Activated B cell treated with CpG ODN at 0.5 μM for 24 hours (primary cell): ENCODE measurements at regions of chr20 and their contacts with region 1.

Region 1: GRCh38 chr20:53216856-53217576 is 244.9 kb downstream of the TSHZ2 start:
- DNase-seq: peak; percentile 67
- ATAC-seq: peak; percentile 78
- H3K4me3 Mint-ChIP-seq: peak overlapping the region; percentile 41
- H3K27ac Mint-ChIP-seq: no peak overlapping the region
- H3K4me1 Mint-ChIP-seq: peaks cover 12% of the 10 kb centered on the region
- H3K27me3 Mint-ChIP-seq: peaks cover 12% of the 10 kb centered on the region
- CTCF ChIP-seq: peak; percentile 61

Region 2: GRCh38 chr20:52242237-52243230 is 974.5 kb before region 1 on chr20:
- CTCF ChIA-PET with region 1: no interaction called
- POLR2A ChIA-PET with region 1: no interaction called
- intact Hi-C with region 1: loop called (anchors 2 kb)
- DNase-seq: no peak
- ATAC-seq: no peak
- H3K4me3 Mint-ChIP-seq: no peak overlapping the region
- H3K27ac Mint-ChIP-seq: no peak overlapping the region
- H3K4me1 Mint-ChIP-seq: no peaks in the 10 kb centered on the region
- H3K27me3 Mint-ChIP-seq: peaks cover 10% of the 10 kb centered on the region
- CTCF ChIP-seq: peak; percentile 73

Region 3: DNA sequence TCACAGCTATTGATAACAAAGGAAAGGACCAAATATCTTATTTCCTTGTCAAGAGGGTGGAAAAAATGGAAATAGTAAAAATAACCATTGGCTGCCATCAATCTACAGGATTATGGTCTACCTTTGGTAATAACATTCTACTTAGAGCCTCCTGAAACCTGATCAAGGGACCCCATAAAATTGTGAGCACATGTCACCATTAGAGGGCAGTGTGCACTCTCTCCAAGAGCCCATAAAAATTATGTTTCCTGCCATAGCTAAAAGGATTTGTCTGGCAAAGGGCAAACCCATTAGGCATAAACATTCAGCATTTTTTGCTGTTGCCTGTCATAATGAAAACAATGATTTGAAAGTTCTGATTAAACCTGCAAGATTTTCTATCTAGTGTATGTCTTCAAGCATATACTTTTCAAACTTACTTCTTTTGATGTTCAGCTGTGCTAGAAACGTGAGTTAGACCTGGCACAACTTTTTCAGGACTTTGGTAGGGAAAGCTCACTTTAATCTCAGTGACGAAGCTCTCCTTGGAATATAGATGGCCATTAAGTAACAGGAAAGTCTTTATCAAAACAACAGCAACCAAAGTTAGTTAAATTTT is 904.8 kb before region 1 on chr20:
- CTCF ChIA-PET with region 1: interaction called, 17 read pairs
- POLR2A ChIA-PET with region 1: no interaction called
- intact Hi-C with region 1: no loop called
- DNase-seq: no peak
- ATAC-seq: no peak
- H3K4me3 Mint-ChIP-seq: no peak overlapping the region
- H3K27ac Mint-ChIP-seq: no peak overlapping the region
- H3K4me1 Mint-ChIP-seq: no peaks in the 10 kb centered on the region
- H3K27me3 Mint-ChIP-seq: peaks cover 25% of the 10 kb centered on the region
- CTCF ChIP-seq: no peak

Region 4: DNA sequence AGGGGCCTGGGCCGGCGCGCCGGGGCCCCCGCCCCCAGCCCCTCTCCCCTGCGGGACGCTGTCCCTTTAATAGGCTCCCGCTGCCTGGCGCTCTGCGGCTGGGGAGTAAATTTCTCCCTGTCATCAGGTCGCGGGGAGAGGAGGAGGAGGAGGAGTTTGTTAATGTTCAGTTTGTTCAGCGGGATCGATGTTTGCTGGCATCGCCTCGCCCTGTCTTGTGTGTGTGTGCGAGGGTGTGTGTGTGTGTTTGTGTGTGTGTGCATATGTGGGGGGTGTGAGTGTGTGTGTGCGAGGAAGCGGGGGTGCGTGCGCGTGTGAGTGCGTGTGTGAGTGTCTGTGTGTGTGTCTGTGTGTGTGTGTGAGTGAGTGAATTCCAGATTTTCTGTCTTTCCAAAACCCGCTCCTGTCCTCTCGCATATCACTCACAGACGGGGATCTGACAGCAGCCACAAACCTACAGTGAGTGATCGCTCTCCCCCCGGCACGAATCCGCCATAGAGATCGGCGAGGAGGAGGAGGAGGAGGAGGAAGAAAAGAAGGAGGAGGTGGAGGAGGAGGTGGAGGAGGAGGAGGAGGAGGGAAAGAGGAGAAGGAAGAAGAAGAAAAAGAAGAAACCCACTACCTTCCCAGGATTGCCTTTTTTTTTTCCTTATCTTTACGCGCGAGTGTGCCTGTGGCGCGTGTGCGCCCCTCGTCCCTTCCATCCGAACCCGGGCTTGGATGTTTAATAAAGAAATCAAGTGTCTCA is 244.7 kb before region 1 on chr20 and contains the start of gene TSHZ2:
- CTCF ChIA-PET with region 1: no interaction called
- POLR2A ChIA-PET with region 1: no interaction called
- intact Hi-C with region 1: loop called (anchors 5 kb)
- DNase-seq: no peak
- ATAC-seq: peak; percentile 33
- H3K4me3 Mint-ChIP-seq: peak within 1 kb of the TSS; percentile 84
- H3K27ac Mint-ChIP-seq: peak within 1 kb of the TSS; percentile 72
- H3K4me1 Mint-ChIP-seq: peaks cover 25% of the 10 kb centered on the region
- H3K27me3 Mint-ChIP-seq: peaks cover 38% of the 10 kb centered on the region
- CTCF ChIP-seq: no peak
- total RNA-seq, gene TSHZ2: 1.5 and 1.7 TPM in 2 replicates

Region 5: GRCh38 chr20:53480913-53481312 is 263.9 kb after region 1 on chr20:
- CTCF ChIA-PET with region 1: no interaction called
- POLR2A ChIA-PET with region 1: no interaction called
- intact Hi-C with region 1: no loop called
- DNase-seq: no peak
- ATAC-seq: no peak
- H3K4me3 Mint-ChIP-seq: no peak overlapping the region
- H3K27ac Mint-ChIP-seq: no peak overlapping the region
- H3K4me1 Mint-ChIP-seq: no peaks in the 10 kb centered on the region
- H3K27me3 Mint-ChIP-seq: no peaks in the 10 kb centered on the region
- CTCF ChIP-seq: no peak